Calu3 (cell line): ENCODE measurements at regions of chr1 and their contacts with region 1.

Region 1: DNA sequence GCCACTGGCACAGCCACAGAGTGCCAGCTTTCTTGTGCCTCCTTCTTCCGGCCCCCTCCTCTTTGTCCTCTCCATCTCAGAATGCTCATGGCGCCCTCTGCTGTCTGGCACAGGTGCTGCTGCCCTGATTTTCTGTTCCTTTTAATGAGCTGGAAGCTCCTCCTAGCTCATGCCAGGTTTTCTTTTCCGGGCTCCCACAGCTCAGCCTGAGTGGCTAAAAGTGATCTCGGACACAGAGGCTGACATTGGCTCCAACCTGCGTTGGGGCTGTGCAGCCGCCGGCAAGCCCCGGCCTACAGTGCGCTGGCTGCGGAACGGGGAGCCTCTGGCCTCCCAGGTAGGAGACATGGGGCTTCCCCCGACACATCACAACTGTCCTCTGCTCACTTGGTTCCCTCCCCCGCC is 18.7 kb downstream of the CNTN2 start:
- DNase-seq: peak; percentile 84
- H3K4me3 Mint-ChIP-seq: no peak overlapping the region
- H3K27ac Mint-ChIP-seq: no peak overlapping the region
- H3K4me1 Mint-ChIP-seq: no peaks in the 10 kb centered on the region
- H3K27me3 Mint-ChIP-seq: peaks cover 69% of the 10 kb centered on the region
- CTCF ChIP-seq: peak; percentile 89

Region 2: GRCh38 chr1:204924013-204924967 is 137.4 kb before region 1 on chr1:
- CTCF ChIA-PET with region 1: no interaction called
- intact Hi-C with region 1: no loop called
- DNase-seq: peak; percentile 9
- H3K4me3 Mint-ChIP-seq: no peak overlapping the region
- H3K27ac Mint-ChIP-seq: no peak overlapping the region
- H3K4me1 Mint-ChIP-seq: no peaks in the 10 kb centered on the region
- H3K27me3 Mint-ChIP-seq: peaks cover 81% of the 10 kb centered on the region
- CTCF ChIP-seq: no peak

Region 3: GRCh38 chr1:204975570-204976235 is 86.0 kb before region 1 on chr1:
- CTCF ChIA-PET with region 1: interaction called, 44 read pairs
- intact Hi-C with region 1: no loop called
- DNase-seq: peak; percentile 82
- H3K4me3 Mint-ChIP-seq: no peak overlapping the region
- H3K27ac Mint-ChIP-seq: no peak overlapping the region
- H3K4me1 Mint-ChIP-seq: no peaks in the 10 kb centered on the region
- H3K27me3 Mint-ChIP-seq: peaks cover 99% of the 10 kb centered on the region
- CTCF ChIP-seq: peak; percentile 69

Region 4: DNA sequence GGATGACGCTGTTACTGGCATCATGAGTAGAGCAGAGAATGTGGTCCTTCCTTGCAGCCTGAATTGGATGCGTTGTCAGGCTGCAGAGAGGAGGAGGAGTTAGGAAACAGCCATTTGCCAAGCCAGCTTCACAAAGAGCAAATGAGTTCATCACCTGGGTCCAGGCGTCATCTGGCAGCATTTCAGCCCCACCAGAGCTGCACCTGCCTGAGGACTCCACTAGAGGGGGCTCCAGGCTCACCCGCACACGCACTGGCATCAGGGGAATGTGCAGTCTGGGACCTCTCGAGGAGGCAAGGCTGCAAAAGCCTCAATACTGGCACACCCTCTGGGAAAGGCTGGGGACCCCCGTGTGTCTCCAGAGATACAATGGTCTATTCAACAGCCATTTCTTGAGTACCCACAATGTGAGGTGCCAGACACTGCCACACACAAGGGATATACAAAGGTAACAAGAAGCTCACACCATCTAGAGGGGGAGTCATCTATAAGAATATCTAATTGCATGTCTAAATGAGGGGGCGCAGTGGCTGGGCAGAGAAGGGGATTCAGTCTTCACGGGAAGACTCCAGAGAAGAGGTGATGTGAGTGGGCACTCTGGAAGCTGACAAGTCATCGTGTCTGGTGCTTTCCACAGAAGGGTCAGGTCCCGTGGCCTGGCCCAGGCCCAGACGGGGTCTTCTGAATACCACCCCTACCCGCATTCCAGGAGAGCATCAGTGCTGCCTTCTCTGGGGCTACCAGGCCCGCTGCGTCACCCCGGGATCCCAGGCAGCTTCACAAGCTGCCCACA is 72.2 kb before region 1 on chr1:
- CTCF ChIA-PET with region 1: interaction called, 95 read pairs
- intact Hi-C with region 1: loop called (anchors 1 kb)
- DNase-seq: peak; percentile 79
- H3K4me3 Mint-ChIP-seq: no peak overlapping the region
- H3K27ac Mint-ChIP-seq: no peak overlapping the region
- H3K4me1 Mint-ChIP-seq: no peaks in the 10 kb centered on the region
- H3K27me3 Mint-ChIP-seq: peaks cover 100% of the 10 kb centered on the region
- CTCF ChIP-seq: peak; percentile 79

Region 5: DNA sequence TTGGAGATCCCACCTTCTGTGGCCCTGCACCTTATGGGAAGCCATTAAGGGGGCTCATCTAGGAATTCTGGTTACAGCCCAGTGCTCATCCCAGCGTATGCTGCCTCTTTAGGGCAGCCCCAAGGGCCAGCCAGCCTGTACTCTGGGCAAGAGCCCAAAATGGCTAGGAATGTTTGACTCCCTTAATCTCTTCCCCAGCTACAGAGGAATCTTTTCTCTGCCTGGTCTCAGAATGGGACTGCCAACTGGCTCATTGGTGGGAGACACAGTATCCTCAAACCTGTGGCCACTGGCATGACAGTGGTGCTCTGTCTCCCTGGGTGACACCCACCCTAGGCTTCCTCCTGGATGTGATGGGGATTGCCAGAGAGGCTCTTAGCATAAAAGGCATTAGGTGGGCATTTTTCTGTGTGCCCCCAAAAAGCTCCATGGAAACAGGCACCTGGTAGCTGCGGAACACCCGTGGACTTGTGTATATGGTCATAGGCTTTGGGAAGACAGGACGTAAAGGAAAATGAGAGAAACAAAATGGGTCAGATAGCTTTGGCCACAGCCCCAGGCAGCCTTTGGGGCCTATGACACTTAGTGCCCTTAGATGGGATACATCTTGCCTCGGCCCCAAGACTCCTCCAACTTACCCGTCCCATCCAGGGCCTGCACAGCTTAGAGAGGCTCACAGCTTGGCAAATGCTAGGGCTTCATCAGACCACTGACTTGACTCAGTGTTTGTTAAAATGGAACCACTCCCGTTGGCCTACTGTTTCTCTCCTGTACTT is 15.7 kb after region 1 on chr1:
- CTCF ChIA-PET with region 1: interaction called, 15 read pairs
- intact Hi-C with region 1: no loop called
- DNase-seq: no peak
- H3K4me3 Mint-ChIP-seq: no peak overlapping the region
- H3K27ac Mint-ChIP-seq: no peak overlapping the region
- H3K4me1 Mint-ChIP-seq: no peaks in the 10 kb centered on the region
- H3K27me3 Mint-ChIP-seq: no peaks in the 10 kb centered on the region
- CTCF ChIP-seq: no peak

Region 6: DNA sequence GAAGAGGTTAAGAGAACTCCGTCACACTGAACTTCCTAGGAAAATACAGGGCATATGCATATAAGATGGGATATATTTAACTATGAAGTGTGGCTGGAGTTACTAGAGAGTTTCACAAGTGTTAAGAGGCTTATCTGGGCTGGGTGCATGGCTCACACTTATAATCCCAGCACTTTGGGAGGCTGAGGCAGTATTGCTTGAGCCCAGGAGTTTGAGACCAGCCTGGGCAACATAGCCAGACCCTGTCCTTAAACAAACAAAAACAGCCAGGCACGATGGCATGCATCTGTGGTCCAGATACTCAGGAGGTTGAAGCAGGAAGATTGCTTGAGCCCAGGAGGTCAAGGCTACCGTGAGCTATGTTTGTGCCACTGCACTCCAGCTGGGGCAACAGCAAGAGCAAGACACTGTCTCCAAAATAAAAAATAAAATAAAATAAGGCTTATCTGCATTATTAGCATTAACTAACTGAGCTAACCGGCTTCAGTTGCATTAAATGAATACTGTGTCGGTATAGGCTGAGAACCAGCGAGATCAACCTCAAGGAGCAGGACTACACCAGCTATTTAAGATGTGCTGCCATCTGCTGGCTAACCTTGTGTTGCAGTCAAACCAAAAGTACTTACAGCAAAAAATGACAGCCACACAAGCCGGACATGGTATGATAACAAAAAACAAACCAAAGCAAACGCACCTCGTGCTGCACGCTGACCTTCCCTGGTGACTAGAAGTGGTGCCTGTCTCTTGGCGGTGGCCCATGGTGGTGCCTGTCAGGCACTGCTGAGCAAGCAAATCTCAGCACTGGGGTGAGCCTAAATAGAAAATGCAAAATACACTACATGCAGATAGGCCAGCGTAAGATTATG is 79.8 kb after region 1 on chr1:
- CTCF ChIA-PET with region 1: interaction called, 11 read pairs
- intact Hi-C with region 1: no loop called
- DNase-seq: peak; percentile 78
- H3K4me3 Mint-ChIP-seq: peak overlapping the region; percentile 25
- H3K27ac Mint-ChIP-seq: no peak overlapping the region
- H3K4me1 Mint-ChIP-seq: no peaks in the 10 kb centered on the region
- H3K27me3 Mint-ChIP-seq: no peaks in the 10 kb centered on the region
- CTCF ChIP-seq: peak; percentile 67

Region 7: GRCh38 chr1:205300886-205301821 is 239.5 kb after region 1 on chr1:
- CTCF ChIA-PET with region 1: no interaction called
- intact Hi-C with region 1: no loop called
- DNase-seq: peak; percentile 78
- H3K4me3 Mint-ChIP-seq: peak overlapping the region; percentile 46
- H3K27ac Mint-ChIP-seq: peak overlapping the region; percentile 70
- H3K4me1 Mint-ChIP-seq: peaks cover 38% of the 10 kb centered on the region
- H3K27me3 Mint-ChIP-seq: no peaks in the 10 kb centered on the region
- CTCF ChIP-seq: no peak